IMR-90 (cell line): ENCODE measurements at regions of chr7 and their contacts with region 1.

Region 1: DNA sequence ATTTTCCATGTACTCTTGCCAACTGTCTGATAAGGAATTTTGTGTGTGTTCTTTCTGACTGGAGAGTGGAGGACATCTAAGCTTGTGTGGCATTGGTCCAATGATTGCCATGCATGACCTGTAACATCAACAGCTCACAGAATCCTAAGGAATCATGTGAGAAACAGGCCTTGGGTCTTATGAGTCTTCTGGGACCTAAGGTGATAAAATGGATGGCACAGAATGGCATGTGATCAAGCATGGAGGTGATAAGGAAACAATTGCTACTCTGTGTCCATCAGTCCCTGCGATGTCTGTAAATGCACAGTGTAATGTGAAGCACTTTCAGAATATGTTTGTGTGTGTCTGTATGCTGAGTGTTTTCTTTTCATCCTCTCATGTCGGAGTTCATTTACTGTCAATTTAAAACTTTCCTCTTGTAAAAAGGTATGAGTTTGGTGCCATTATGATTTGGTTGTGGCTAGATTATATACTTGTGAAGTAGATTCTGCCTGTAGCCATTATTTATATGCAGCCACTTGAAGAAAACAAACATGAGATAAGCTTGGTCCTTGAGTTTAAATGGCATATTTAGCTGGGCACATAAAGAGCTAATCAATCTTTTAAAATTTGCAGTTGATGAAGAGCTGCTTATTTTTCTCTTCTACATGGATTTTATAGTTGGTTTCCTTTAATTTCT is 127.5 kb downstream of the VPS50 start:
- DNase-seq: no peak
- ATAC-seq: no peak
- H3K4me3 ChIP-seq: no peak overlapping the region
- H3K27ac ChIP-seq: no peak overlapping the region
- H3K4me1 ChIP-seq: no peaks in the 10 kb centered on the region
- H3K27me3 ChIP-seq: no peaks in the 10 kb centered on the region
- CTCF ChIP-seq: no peak
- POLR2A ChIP-seq: no peak
- RAD21 ChIP-seq: no peak

Region 2: DNA sequence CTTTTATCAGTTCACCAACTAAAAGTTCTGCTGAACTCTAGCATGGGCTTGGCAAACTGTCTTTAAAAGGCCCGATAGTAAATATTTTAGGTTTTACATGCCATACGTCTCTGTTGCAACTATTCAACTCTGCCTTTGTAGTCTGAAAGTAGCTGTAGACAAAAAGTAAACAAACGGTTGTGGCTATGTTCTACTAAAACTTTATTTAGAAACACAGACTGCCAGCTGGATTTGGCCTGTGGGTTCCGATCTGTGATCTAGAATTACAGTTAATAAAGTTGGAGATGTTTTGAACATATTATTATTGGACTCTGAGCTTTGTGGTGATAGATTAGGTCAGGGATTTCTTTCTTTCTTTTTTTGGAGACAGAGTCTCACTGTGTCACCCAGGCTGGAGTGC is 94.4 kb before region 1 on chr7:
- CTCF ChIA-PET with region 1: no interaction called
- POLR2A ChIA-PET with region 1: no interaction called
- dilution Hi-C with region 1: no loop called
- in situ Hi-C with region 1: loop called (anchors 5 kb)
- intact Hi-C with region 1: no loop called
- DNase-seq: no peak
- ATAC-seq: no peak
- H3K4me3 ChIP-seq: no peak overlapping the region
- H3K27ac ChIP-seq: no peak overlapping the region
- H3K4me1 ChIP-seq: no peaks in the 10 kb centered on the region
- H3K27me3 ChIP-seq: no peaks in the 10 kb centered on the region
- CTCF ChIP-seq: no peak
- POLR2A ChIP-seq: no peak
- RAD21 ChIP-seq: no peak

Region 3: DNA sequence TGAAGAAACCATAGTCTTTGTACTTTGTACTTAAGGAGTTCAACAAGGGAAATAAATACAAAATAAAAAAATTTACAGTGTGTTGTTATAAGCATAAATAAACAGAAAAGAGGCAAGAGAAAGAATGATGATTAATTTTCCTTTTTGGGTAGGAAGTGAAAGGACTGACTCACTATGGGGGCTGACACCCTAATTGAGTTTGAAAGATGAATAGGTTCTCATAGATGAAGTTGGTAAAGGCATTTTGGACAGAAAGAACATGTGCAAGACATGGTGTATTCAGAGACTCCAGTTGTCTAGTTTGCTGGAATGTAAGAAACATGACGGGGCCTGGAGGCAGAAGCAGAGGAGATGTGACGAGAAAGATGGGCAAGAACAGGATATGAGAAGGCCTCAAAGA is 43.8 kb before region 1 on chr7:
- CTCF ChIA-PET with region 1: interaction called, 3 read pairs
- POLR2A ChIA-PET with region 1: no interaction called
- dilution Hi-C with region 1: no loop called
- in situ Hi-C with region 1: no loop called
- intact Hi-C with region 1: loop called (anchors 5 kb)
- DNase-seq: no peak
- ATAC-seq: no peak
- H3K4me3 ChIP-seq: no peak overlapping the region
- H3K27ac ChIP-seq: no peak overlapping the region
- H3K4me1 ChIP-seq: peaks cover 3% of the 10 kb centered on the region; the same call in 1 of the 2 replicates
- H3K27me3 ChIP-seq: no peaks in the 10 kb centered on the region
- CTCF ChIP-seq: no peak
- POLR2A ChIP-seq: no peak
- RAD21 ChIP-seq: no peak